Natural killer cell (primary cell): ENCODE measurements at regions of chr6 and their contacts with region 1.

Region 1: DNA sequence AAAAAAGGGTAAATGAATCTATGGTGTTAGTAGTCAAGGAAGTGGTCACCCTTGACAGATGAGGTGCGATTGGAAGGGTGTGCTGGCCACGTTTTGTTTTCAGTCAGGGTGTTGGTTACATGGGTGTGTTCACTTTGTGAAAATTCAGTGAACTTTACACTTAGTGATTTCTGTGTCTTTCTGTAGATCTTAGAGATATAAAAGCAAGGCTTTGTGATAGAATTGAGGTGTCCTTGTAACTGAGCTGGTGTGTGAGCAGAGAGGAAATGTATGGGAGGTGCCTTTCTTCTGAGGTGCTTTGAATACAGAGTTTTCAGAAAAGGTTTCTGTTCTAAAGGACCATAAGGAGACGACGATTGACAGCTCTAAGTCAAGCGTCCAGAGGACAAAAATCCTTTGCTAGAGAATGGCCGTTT is 90.5 kb downstream of the SAMD3 start:
- DNase-seq: peak; percentile 71 to 82
- ATAC-seq: peak; percentile 81 to 93 (median 92)
- H3K4me3 ChIP-seq: peak overlapping the region; percentile 14
- H3K4me3 Mint-ChIP-seq: peak overlapping the region; percentile 80
- H3K27ac ChIP-seq: peak overlapping the region; percentile 91
- H3K27ac Mint-ChIP-seq: peak overlapping the region; percentile 92 to 93
- H3K4me1 ChIP-seq: peaks cover 34% of the 10 kb centered on the region
- H3K4me1 Mint-ChIP-seq: peaks cover 76 to 86% of the 10 kb centered on the region in 2 donors
- H3K27me3 ChIP-seq: no peaks in the 10 kb centered on the region
- H3K27me3 Mint-ChIP-seq: no peaks in the 10 kb centered on the region
- CTCF ChIP-seq: no peak

Region 2: DNA sequence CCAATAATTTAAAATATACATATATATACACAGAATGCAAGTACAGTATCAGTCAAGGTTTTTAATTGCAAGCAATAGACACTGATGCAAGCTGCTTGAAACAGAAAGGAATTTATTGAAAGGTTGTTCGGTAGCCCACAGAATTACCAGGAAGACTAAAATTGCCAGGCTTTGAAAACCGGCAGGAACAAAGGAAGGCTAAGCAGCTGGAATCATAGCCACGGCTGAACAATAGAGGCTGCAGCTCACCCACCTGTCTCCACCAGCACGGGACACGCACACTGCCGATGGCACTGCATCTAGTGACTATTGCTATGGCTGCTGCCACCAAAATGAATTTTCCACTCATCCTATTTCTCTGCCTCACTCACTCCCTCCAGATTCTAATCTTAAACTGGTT is 135.9 kb before region 1 on chr6:
- intact Hi-C with region 1: no loop called
- DNase-seq: no peak
- ATAC-seq: no peak
- H3K4me3 ChIP-seq: no peak overlapping the region
- H3K4me3 Mint-ChIP-seq: no peak overlapping the region
- H3K27ac ChIP-seq: no peak overlapping the region
- H3K27ac Mint-ChIP-seq: no peak overlapping the region
- H3K4me1 ChIP-seq: no peaks in the 10 kb centered on the region
- H3K4me1 Mint-ChIP-seq: no peaks in the 10 kb centered on the region
- H3K27me3 ChIP-seq: no peaks in the 10 kb centered on the region
- H3K27me3 Mint-ChIP-seq: peaks cover 9 to 21% of the 10 kb centered on the region in 2 donors
- CTCF ChIP-seq: no peak

Region 3: DNA sequence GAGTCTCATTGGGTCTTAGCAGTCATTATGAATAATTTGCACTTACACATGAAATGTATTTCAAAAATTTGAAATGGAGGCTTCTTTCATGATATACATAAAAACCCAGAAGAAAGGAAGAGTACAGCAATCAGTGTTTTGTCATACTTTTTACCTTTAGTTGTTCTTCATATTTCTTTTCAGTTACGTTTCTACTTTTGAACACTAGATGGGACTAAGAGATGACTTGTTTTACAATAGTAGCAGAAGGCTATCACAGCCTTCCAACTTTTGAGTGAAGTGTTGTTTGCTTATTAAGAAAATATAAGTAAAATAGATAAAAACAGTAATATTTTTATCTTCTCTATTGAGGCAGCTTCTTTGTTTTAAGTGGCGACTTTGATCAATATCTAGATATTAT is 55.8 kb before region 1 on chr6:
- intact Hi-C with region 1: loop called (anchors 10 kb)
- DNase-seq: peak in 1 of 2 donors; percentile 32
- ATAC-seq: peak in 2 of 3 donors; percentile 51 to 61
- H3K4me3 ChIP-seq: no peak overlapping the region
- H3K4me3 Mint-ChIP-seq: no peak overlapping the region
- H3K27ac ChIP-seq: no peak overlapping the region
- H3K27ac Mint-ChIP-seq: no peak overlapping the region
- H3K4me1 ChIP-seq: no peaks in the 10 kb centered on the region
- H3K4me1 Mint-ChIP-seq: peaks cover 18 to 23% of the 10 kb centered on the region in 2 donors
- H3K27me3 ChIP-seq: no peaks in the 10 kb centered on the region
- H3K27me3 Mint-ChIP-seq: no peaks in the 10 kb centered on the region
- CTCF ChIP-seq: peak; percentile 53

Region 4: GRCh38 chr6:130161683-130162404 is 29.6 kb after region 1 on chr6:
- intact Hi-C with region 1: loop called (anchors 1 kb)
- DNase-seq: no peak
- ATAC-seq: peak in 2 of 3 donors; percentile 50 to 81
- H3K4me3 ChIP-seq: no peak overlapping the region
- H3K4me3 Mint-ChIP-seq: no peak overlapping the region
- H3K27ac ChIP-seq: peak overlapping the region; percentile 52
- H3K27ac Mint-ChIP-seq: peak overlapping the region; percentile 86 to 92
- H3K4me1 ChIP-seq: peaks cover 6% of the 10 kb centered on the region
- H3K4me1 Mint-ChIP-seq: peaks cover 57 to 58% of the 10 kb centered on the region in 2 donors
- H3K27me3 ChIP-seq: no peaks in the 10 kb centered on the region
- H3K27me3 Mint-ChIP-seq: no peaks in the 10 kb centered on the region
- CTCF ChIP-seq: no peak

Region 5: GRCh38 chr6:130183271-130184222 is 51.3 kb after region 1 on chr6:
- intact Hi-C with region 1: loop called (anchors 5 kb)
- DNase-seq: peak; percentile 29 to 75
- ATAC-seq: peak; percentile 84 to 94 (median 90)
- H3K4me3 ChIP-seq: no peak overlapping the region
- H3K4me3 Mint-ChIP-seq: peak overlapping the region; percentile 59
- H3K27ac ChIP-seq: peak overlapping the region; percentile 78
- H3K27ac Mint-ChIP-seq: peak overlapping the region; percentile 85 to 89
- H3K4me1 ChIP-seq: peaks cover 29% of the 10 kb centered on the region
- H3K4me1 Mint-ChIP-seq: peaks cover 72 to 75% of the 10 kb centered on the region in 2 donors
- H3K27me3 ChIP-seq: no peaks in the 10 kb centered on the region
- H3K27me3 Mint-ChIP-seq: no peaks in the 10 kb centered on the region
- CTCF ChIP-seq: no peak

Region 6: GRCh38 chr6:130215526-130215925 is 83.2 kb after region 1 on chr6:
- intact Hi-C with region 1: loop called (anchors 2 kb)
- DNase-seq: peak in 1 of 2 donors; percentile 81
- ATAC-seq: peak; percentile 74 to 88 (median 88)
- H3K4me3 ChIP-seq: peak overlapping the region; percentile 52
- H3K4me3 Mint-ChIP-seq: peak overlapping the region; percentile 94
- H3K27ac ChIP-seq: peak overlapping the region; percentile 58
- H3K27ac Mint-ChIP-seq: peak overlapping the region; percentile 89 to 90
- H3K4me1 ChIP-seq: peaks cover 19% of the 10 kb centered on the region
- H3K4me1 Mint-ChIP-seq: peaks cover 69 to 74% of the 10 kb centered on the region in 2 donors
- H3K27me3 ChIP-seq: no peaks in the 10 kb centered on the region
- H3K27me3 Mint-ChIP-seq: no peaks in the 10 kb centered on the region
- CTCF ChIP-seq: no peak